ENCODE measurements at regions of chr17 and their contacts with region 1.

Region 1: GRCh38 chr17:45228763-45229539 is 7.3 kb downstream of the FMNL1 start:
- DNase-seq: peak; percentile 63 to 86 (median 77)
- ATAC-seq: peak; percentile 48 to 55
- H3K4me3 Mint-ChIP-seq: peak overlapping the region; percentile 84 to 100 (median 98)
- H3K27ac Mint-ChIP-seq: peak overlapping the region; percentile 98 to 100 (median 100)
- H3K4me1 Mint-ChIP-seq: peaks cover 59 to 98% (median 86%) of the 10 kb centered on the region in 4 donors
- H3K27me3 Mint-ChIP-seq: no peaks in the 10 kb centered on the region

Region 2: DNA sequence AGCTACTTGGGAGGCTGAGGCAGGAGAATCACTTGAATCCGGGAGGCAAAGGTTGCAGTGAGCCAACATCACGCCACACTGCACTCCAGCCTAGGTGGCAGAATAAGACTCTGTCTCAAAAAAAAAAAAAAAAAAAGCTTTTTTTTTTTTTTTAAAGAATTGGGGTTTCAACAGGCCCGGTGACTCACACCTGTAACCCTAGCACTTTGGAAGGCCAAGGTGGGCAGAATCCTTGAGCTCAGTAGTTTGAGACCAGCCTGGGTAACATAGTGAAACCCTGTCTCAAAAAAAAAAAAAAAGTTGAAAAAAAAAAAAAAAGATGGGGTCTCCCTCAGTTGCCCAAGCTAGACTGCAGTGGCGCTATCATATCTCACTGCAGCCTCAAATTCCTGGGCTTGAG is 73.9 kb before region 1 on chr17:
- POLR2A ChIA-PET with region 1: interaction called, 159 read pairs
- DNase-seq: no peak
- ATAC-seq: peak in 1 of 2 donors; percentile 21
- H3K4me3 Mint-ChIP-seq: no peak overlapping the region
- H3K27ac Mint-ChIP-seq: peak overlapping the region in 4 of 10 donors; percentile 31 to 60 (median 54)
- H3K4me1 Mint-ChIP-seq: peaks cover 19 to 63% (median 49%) of the 10 kb centered on the region in 4 donors
- H3K27me3 Mint-ChIP-seq: no peaks in the 10 kb centered on the region

Region 3: DNA sequence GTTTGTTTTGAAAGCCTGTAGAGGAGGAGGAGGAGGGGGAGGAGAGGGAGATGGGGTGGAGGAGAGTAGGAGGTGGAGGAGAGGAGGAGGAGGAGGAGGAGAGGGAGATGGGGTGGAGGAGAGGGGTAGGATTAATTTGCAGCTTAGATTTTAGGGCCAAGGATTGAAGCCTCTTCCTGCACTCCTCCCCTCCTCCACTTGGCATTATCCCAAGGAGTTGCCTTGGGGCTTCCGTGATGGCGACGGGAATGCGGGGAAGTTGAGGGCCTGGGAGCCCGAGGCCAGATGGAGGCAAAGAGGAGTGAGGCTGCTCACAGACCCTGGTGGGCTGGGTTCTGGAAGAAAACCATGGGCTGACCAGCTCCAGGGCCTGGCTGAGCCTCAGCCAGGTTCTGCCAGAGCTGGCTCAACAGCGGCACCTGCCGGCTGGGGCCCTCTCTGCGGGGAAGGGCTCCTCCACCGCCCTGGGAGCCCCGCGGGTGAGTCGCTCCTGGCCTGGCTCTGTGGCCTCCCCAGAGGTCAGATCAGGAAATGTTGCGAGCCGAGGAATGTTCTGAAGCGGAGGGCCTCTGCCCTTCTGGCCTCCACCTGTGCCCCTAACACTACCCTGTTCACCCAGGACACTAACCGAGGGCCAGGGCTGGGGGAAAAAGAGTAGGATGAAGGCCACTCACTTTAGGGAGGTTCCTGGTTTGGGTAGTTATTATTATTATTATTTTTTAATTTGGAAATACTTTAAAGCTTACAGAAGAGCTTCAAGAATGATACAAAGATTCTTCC is 31.2 kb before region 1 on chr17:
- POLR2A ChIA-PET with region 1: no interaction called
- DNase-seq: peak; percentile 72 to 92 (median 84)
- ATAC-seq: peak; percentile 99 to 100
- H3K4me3 Mint-ChIP-seq: no peak overlapping the region
- H3K27ac Mint-ChIP-seq: no peak overlapping the region
- H3K4me1 Mint-ChIP-seq: peaks cover 2 to 9% (median 5%) of the 10 kb centered on the region in 4 donors
- H3K27me3 Mint-ChIP-seq: no peaks in the 10 kb centered on the region

Region 4: DNA sequence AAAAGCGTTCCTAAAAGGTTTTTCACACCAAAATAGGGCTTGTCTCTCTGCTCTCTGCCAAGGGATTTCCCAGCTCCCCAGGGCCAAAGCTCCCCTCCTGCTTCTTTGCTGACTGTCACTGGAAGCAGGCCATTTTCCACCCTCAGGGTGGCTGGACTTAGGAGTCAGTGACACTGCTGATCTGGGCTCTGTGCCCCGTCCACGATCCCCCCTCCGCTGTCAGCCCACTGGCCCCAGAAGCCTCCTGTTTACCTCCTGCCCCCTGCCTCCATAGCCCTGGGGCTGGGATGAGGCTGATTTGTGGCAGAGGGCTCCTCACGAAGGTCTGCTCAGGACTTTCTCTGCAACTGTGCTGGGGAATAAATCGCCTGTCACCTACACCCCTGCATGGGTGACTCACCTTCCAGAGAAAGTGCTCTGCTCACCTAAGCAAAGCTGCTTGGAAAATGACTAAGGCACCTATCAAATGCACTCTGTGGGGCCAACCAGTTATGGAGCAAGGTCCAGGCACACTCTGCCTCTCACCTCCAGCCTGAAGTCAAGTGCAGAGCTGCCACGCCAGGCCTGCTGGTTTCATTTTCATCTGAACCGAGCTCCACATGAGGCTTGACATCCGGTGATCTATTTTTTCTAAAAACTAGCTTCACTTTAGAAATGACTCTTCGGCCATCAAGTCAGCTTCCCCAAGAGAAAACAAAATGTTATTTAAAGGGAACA is 83.0 kb after region 1 on chr17:
- POLR2A ChIA-PET with region 1: interaction called, 115 read pairs
- DNase-seq: peak; percentile 29 to 70 (median 54)
- ATAC-seq: peak; percentile 7 to 21
- H3K4me3 Mint-ChIP-seq: peak overlapping the region; percentile 76 to 95 (median 87)
- H3K27ac Mint-ChIP-seq: peak overlapping the region; percentile 91 to 100 (median 98)
- H3K4me1 Mint-ChIP-seq: peaks cover 56 to 88% (median 82%) of the 10 kb centered on the region in 4 donors
- H3K27me3 Mint-ChIP-seq: no peaks in the 10 kb centered on the region

Measured in naive thymus-derived CD8-positive, alpha-beta T cell (primary cell).